Left cardiac atrium (tissue), 4 donors: ENCODE measurements at regions of chr6 and their contacts with region 1.

Region 1: GRCh38 chr6:32763427-32763826 is at the start of gene HLA-DQB2:
- DNase-seq: no peak
- ATAC-seq: no peak
- total RNA-seq, gene HLA-DQB2: 1.3 to 4.1 TPM

Region 2: DNA sequence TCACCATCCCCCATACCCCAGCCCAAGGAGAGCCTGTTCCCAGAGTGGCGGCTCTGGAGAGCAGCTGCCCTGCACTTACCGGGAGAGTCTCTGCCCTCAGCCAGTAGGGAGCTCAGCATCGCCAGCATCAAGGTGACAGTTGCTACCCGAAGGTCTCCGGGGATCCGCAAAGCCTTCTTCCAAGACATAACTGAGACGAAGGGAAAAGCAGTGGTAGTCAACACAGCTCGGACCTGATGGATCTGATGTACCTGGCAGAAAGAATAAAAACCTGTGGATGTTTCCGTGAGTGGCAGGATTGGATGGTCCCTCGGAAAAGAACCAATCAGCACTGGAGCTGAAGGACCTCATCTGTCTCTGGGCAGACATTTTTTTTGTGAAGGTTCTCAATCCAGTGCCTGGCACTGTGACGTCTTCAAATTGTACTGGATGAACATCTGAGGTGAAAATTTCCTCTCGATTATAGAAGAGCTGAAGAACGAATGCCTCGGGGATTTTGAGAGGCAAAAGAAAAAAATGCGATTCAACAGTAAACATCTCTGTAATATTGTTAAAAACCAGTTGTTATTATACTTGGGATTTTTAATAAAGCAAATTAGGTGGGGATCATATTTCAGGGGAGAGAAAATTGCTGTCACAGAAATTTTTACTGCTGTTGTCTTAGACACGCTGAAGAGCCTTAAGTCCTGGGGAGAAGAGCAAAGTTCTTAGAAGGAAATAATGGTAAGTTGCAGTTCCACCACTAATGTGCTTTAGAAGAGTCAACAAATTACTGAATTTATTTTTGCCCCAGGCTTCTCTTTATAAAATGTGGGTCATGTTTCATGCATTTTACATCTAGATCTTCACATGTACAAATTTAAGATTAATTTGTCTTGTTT is 96.8 kb before region 1 on chr6 and contains the start of gene HLA-DQB1:
- intact Hi-C with region 1: loop called in 1 of 2 experiments (anchors 5 kb)
- DNase-seq: peak; percentile 23
- ATAC-seq: peak; percentile 86 to 87
- total RNA-seq, gene HLA-DQB1: 4.6 to 15.3 TPM

Region 3: DNA sequence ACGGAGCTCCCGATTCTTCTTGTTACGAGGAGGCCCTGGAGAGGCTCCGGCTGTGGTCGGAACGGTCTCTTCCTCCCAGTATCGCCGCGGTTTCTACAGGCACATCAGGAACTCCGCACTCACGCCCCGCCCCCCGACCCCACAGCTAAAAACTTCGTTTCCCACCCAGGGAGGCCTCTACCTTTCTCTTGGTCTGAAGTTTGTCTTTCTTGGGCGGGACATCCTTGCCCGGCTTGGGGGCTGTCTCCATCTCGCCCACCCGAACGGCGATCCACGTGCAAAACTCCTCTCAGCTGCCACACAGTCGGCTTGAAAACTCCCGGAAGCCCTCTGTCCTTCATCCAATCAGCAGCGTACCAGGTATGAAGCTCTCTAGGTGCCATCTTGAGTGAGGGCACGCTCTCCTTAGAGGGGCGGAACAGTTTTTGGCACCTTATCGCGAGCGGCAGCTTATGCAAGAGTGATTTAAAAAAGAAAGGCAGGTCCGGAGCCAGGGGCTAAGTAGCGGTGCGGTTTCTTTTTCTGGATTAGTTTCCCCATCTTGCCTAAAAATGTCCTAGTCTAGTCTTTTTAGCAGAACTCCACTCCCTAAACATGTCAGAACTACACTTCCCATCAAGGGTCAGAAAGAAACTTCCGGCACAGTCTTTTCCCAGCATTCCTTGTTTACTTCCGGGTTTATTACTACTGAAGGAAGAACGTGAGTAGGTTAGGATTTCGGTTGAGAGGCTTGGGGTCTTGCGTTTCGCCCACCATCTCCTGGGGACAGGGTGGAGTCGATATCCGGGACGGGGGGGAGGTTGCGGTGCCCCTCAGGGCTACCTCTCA is 525.7 kb after region 1 on chr6 and contains the starts of genes PFDN6 and WDR46:
- intact Hi-C with region 1: no loop called
- DNase-seq: peak; percentile 83
- ATAC-seq: peak; percentile 96
- total RNA-seq, gene PFDN6: 43.9 to 47.5 TPM
- total RNA-seq, gene WDR46: 19.0 to 31.6 TPM